Activated T-helper 1 cell treated with anti-CD3 and anti-CD28 coated beads, Interleukin-12 subunit alpha, Interleukin-12 subunit beta, Interleukin-2, Interleukin-4 antibody, amounts not matched to agents 30 ng/mL and 10 ng/mL and 1 ng/mL, durations not matched to agents 14 hours and 24 hours and 36 hours (primary cell): ENCODE measurements at regions of chrX and their contacts with region 1.

Region 1: GRCh38 chrX:71181910-71182799 is 37.5 kb downstream of the NLGN3 start:
- DNase-seq: peak; percentile 80
- H3K4me3 Mint-ChIP-seq: peak overlapping the region; percentile 91
- H3K27ac Mint-ChIP-seq: peak overlapping the region; percentile 98
- H3K4me1 Mint-ChIP-seq: peaks cover 26% of the 10 kb centered on the region
- H3K27me3 Mint-ChIP-seq: no peaks in the 10 kb centered on the region

Region 2: DNA sequence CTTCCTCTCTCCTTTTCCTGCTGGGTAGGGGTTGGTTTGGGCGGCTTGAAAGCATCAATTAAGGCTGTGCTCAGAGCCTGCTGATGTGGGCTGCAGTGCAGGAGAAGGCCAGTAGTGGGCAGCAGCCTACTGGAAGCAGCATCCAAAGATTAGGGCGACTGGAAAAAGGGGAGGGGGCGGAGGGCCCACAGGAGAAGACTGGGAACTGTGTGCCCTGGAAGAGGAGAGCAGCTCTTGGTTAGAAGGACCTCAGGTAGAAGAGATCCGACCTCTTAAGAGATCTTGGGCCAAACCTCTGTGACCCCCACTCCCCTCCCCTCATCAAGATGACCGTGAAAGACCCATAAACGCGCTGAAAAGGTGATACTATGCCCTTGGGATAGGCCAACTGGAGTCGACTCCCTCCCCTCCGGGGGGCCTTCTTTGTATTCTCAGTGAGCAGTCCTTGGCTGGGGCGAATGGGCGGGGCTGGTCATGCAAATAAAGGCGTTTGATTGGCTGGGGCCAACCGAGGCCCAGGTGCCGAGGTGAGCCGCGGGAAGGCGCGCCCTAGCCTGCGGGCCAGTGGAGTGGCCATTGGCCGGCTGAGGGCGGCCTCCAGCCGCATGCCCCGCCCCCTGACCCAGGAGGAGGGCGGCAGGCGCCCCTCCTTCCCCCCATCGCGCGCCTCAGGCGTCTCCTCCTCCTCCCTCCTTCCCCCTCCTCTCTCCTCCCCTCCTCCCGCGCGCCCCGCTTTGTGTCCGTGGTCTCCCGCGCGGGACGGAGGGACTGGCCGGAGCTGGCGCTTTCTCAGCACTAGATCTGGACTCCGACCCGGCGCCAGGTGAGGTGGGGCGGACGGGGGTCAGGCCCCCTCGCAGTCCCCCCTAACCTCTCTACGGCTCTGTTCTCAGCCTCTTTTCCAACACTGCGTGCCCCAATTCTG is 727.5 kb before region 1 on chrX:
- intact Hi-C with region 1: loop called (anchors 5 kb)
- DNase-seq: peak; percentile 67
- H3K4me3 Mint-ChIP-seq: peak overlapping the region; percentile 93
- H3K27ac Mint-ChIP-seq: peak overlapping the region; percentile 96
- H3K4me1 Mint-ChIP-seq: peaks cover 38% of the 10 kb centered on the region
- H3K27me3 Mint-ChIP-seq: no peaks in the 10 kb centered on the region

Region 3: DNA sequence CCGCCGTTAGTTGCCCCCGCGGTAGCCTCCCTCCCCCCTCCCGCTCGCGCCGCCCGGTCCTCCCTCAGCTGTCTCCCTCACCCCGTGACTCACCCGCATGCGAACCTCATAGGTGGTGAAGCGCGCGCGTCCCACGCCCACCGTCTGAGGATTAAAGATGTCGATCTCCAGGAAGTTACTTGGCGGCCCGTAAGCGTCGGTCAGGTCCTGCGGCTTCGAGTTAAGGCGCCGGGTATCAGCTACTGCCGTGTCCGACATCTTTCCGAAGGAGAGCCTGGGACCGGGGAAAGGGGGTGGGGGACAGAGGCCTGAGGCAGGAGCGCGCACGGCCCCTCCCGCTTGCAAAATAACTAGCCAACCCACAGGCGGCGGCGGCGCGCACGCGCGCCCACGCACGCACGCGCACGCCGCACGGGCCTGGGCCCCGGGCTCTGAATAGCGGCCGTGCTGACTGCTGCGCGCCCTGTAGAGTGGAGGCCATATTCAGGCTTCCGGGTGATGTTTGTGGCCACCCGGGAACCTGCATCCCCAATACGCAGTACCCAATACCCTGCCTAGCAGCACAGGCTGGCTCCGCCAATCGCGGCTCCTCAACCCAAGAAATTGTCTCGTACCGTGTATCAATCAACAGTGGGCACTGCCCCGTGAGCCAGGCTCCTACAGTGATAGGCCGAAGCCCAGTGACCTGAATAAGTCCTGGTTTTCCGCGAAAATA is 113.9 kb before region 1 on chrX and contains the start of gene SNX12:
- intact Hi-C with region 1: loop called (anchors 1 kb)
- DNase-seq: peak; percentile 85
- H3K4me3 Mint-ChIP-seq: peak within 1 kb of the TSS; percentile 98
- H3K27ac Mint-ChIP-seq: peak within 1 kb of the TSS; percentile 96
- H3K4me1 Mint-ChIP-seq: peaks cover 22% of the 10 kb centered on the region
- H3K27me3 Mint-ChIP-seq: peaks cover 7% of the 10 kb centered on the region
- total RNA-seq, gene SNX12: 47.9 and 51.9 TPM in 2 replicates

Region 4: DNA sequence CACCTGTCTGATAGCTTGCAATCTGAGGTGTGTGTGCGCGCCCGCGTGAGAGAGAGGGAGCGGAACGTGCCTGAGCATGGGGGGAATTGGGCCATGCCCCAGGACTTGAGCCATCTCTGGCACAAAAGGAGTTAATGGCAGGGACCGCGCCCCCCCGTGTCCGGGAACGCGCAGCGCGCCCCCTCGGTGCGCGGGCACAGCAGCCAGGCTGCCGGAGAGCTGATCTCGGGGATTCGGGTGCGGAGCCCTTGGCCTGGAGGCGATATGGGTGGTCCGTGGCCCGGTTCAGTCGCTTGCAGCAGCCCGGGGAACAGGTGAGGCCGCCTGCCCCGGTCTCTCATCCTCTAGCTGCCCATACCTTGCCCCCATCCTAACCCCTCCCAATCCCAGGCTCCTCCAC is 37.5 kb before region 1 on chrX and contains the start of gene NLGN3:
- intact Hi-C with region 1: loop called (anchors 5 kb)
- DNase-seq: no peak
- H3K4me3 Mint-ChIP-seq: no peak within 1 kb of the TSS
- H3K27ac Mint-ChIP-seq: no peak within 1 kb of the TSS
- H3K4me1 Mint-ChIP-seq: peaks cover 6% of the 10 kb centered on the region
- H3K27me3 Mint-ChIP-seq: no peaks in the 10 kb centered on the region
- total RNA-seq, gene NLGN3: 1.1 and 1.6 TPM in 2 replicates

Region 5: DNA sequence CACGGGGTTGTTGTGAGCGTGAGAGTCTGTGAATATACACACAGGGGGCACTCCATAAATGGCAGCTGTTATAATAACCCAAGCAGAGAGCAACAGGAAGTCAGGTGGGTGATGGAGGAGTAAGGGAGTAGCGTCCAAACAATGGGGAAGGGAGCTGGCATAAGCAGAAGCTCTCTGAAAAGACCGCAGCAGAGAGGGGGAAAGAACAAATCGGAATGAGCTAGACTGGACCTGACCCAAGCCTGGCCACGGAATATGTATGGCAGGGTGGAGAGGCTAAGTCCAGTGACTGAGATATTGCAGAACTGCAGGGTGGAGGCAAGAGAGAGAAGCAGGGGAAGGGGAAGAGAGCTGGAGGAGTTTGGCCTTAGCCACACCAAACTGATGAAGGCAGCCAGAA is 34.3 kb after region 1 on chrX:
- intact Hi-C with region 1: no loop called
- DNase-seq: no peak
- H3K4me3 Mint-ChIP-seq: no peak overlapping the region
- H3K27ac Mint-ChIP-seq: no peak overlapping the region
- H3K4me1 Mint-ChIP-seq: no peaks in the 10 kb centered on the region
- H3K27me3 Mint-ChIP-seq: peaks cover 1% of the 10 kb centered on the region

Region 6: DNA sequence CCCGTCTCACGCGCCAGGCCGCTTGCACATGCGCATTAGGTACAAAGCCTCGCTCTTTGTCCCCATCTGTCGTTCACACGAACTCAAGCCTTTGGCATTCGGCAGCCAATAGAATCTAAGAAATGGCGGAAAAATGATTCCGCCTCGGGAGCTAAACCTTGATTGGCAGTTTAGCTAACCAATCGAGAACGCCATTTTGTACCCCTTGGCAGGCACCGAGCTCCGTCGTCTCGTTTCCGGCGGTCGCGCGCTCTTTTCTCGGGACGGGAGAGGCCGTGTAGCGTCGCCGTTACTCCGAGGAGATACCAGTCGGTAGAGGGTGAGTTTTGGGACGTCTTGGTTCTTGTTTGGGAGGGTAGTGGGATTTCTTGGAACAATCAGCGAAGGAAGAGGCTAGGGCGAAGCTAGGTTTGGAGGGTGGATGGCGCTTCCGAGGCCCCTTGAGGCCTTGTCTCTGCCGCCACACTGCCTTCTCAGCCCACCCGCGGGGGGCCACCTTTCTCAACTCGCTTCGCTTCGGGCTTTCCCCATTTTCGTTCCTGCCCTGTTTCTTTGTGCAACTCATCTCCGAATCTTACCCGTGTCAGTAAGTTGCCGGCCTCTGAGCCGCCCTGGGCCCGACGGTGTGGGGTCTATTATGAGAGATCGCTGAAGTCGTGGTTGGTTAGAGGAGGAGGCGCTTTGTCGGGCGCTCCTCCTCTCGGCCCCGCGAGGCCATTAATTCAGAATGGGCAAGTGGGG is 101.4 kb after region 1 on chrX and contains the start of gene NONO:
- intact Hi-C with region 1: loop called (anchors 1 kb)
- DNase-seq: peak; percentile 84
- H3K4me3 Mint-ChIP-seq: peak within 1 kb of the TSS; percentile 94
- H3K27ac Mint-ChIP-seq: peak within 1 kb of the TSS; percentile 98
- H3K4me1 Mint-ChIP-seq: peaks cover 15% of the 10 kb centered on the region
- H3K27me3 Mint-ChIP-seq: no peaks in the 10 kb centered on the region
- total RNA-seq, gene NONO: 512 and 546 TPM in 2 replicates

Region 7: DNA sequence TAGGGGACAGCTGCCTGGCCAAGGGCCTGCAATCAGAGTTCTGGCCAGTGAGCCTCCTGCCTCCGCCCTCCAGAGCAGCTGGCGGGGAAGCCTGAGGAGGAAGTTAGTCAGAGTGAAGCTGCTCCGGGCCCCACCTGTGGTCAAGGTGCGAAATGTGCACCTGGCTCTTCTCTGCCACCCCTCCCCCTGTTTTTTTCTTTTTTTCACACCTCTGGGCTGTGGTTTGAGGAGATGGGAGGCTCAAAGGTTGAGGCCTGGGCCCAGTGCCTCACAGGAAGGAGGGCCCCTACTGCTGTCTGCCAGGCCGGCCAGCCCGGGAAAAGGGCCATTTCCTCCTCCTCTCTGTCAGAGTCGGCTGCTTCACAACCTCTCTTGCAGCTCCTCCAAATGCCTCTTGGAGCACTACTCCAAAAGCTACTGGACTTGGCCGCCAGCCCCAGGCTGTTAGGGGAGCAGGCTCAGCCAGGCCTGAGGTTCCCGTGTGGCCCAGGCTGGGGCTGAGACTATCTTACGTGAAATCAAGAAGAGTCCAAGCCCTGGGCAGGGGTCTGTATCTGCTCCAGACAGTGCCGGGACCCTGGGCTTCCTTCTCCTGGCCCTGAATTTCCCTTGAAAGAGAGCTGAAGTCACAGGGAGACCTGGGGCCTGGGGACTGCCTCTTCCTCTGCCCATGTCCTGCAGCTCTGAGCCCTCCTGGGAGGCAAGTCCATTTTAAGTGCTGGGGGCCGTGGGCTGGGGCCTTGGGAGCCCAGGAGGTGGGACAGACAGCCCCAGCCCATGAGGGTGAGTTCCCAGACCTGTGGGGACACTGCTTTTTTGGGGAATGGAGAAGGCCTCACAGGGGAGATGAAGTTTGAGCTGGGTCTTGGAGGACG is 440.7 kb after region 1 on chrX:
- intact Hi-C with region 1: loop called (anchors 5 kb)
- DNase-seq: peak; percentile 65
- H3K4me3 Mint-ChIP-seq: peak overlapping the region; percentile 70
- H3K27ac Mint-ChIP-seq: peak overlapping the region; percentile 97
- H3K4me1 Mint-ChIP-seq: peaks cover 60% of the 10 kb centered on the region
- H3K27me3 Mint-ChIP-seq: no peaks in the 10 kb centered on the region